A549 (cell line): ENCODE measurements at regions of chr15 and their contacts with region 1.

Region 1: GRCh38 chr15:85330901-85331588 is 49.4 kb upstream of the AKAP13 start:
- DNase-seq: peak; percentile 93 to 95
- ATAC-seq: peak; percentile 92 to 96
- H3K4me3 ChIP-seq: peak overlapping the region; percentile 44; the same call in 2 of the 3 replicates
- H3K27ac ChIP-seq: peak overlapping the region; percentile 78 to 85
- H3K4me1 ChIP-seq: peaks cover 26% of the 10 kb centered on the region
- CTCF ChIP-seq: peak; percentile 98
- EP300 ChIP-seq: no peak
- POLR2A ChIP-seq: no peak
- RAD21 ChIP-seq: peak; percentile 99 to 100

Region 2: GRCh38 chr15:84671211-84671610 is 659.8 kb before region 1 on chr15:
- CTCF ChIA-PET with region 1: no interaction called
- POLR2A ChIA-PET with region 1: no interaction called
- DNase-seq: no peak
- ATAC-seq: no peak
- H3K4me3 ChIP-seq: no peak overlapping the region
- H3K27ac ChIP-seq: no peak overlapping the region
- H3K4me1 ChIP-seq: no peaks in the 10 kb centered on the region
- CTCF ChIP-seq: no peak
- EP300 ChIP-seq: no peak
- POLR2A ChIP-seq: no peak
- RAD21 ChIP-seq: no peak

Region 3: GRCh38 chr15:85318048-85318731 is 12.9 kb before region 1 on chr15:
- CTCF ChIA-PET with region 1: interaction called, 83 read pairs
- POLR2A ChIA-PET with region 1: no interaction called
- DNase-seq: peak; percentile 29 to 75
- ATAC-seq: peak; percentile 70 to 81
- H3K4me3 ChIP-seq: no peak overlapping the region
- H3K27ac ChIP-seq: 0 out of 6 replicates have a peak overlapping the region, but pooled peaks have one; percentile 1 to 6
- H3K4me1 ChIP-seq: peaks cover 23% of the 10 kb centered on the region
- CTCF ChIP-seq: no peak; the same call in 2 of the 3 replicates
- EP300 ChIP-seq: no peak
- POLR2A ChIP-seq: no peak
- RAD21 ChIP-seq: no peak; a peak in 2 of 5 replicates

Region 4: GRCh38 chr15:85380217-85380811 is 49.3 kb after region 1 on chr15 and contains the start of gene AKAP13:
- CTCF ChIA-PET with region 1: interaction called, 27 read pairs
- POLR2A ChIA-PET with region 1: interaction called, 23 read pairs
- DNase-seq: peak; percentile 99 to 100
- ATAC-seq: peak; percentile 94 to 96
- H3K4me3 ChIP-seq: peak within 1 kb of the TSS; percentile 91
- H3K27ac ChIP-seq: peak within 1 kb of the TSS; percentile 90 to 92
- H3K4me1 ChIP-seq: peaks cover 29% of the 10 kb centered on the region; the same call in 2 of the 3 replicates
- CTCF ChIP-seq: no peak
- EP300 ChIP-seq: no peak; a peak in 1 of 5 replicates
- POLR2A ChIP-seq: peak; percentile 84
- RAD21 ChIP-seq: no peak; a peak in 1 of 5 replicates
- polyA plus RNA-seq, gene AKAP13: 28.8 and 59.7 TPM in 2 replicates

Region 5: DNA sequence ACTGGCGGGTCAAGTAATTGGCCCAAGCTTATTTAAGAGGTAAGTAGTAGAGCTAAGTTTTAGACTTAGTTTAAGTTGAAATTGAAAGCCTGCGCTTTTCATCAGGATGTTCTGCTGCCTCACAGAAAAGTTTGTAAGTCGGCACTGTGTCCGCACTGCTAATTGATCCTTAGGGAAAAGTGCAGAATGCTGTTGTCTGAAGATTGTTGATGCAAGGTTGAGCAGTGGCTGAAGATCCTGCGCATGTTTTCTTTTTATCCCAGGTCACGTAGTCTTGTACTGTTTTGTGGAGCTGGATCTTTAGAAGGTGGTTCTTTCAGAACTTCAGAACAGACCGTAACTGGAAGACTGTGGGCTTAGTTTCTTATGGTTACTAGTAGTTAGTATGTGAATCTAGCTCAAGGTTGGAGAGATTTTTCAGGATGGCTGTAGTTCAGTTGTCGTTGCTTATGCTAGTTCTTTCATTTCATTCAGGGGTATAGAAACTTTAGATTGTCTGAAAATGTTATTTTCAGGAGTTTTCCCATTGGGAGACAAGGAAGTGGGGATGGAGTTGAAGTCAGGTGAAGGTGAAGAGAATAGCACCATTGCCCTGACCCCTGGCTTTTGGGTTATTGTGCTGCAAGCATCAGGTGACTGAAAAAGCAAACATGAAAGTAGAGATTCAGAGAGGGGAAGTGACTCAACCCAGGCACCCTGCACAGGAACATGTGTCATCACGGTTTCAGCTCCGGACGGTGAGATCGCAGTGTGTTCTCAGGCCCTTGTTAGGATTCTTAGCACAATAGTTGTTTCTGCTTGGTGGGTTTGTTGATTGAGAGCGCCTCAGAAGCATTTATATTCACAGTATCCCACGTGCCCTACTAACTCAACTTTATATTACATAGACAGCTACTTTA is 82.2 kb after region 1 on chr15:
- CTCF ChIA-PET with region 1: interaction called, 247 read pairs
- POLR2A ChIA-PET with region 1: interaction called, 24 read pairs
- DNase-seq: peak; percentile 93 to 98
- ATAC-seq: peak; percentile 96 to 99
- H3K4me3 ChIP-seq: peak overlapping the region; percentile 16
- H3K27ac ChIP-seq: peak overlapping the region; percentile 80 to 81
- H3K4me1 ChIP-seq: peaks cover 64% of the 10 kb centered on the region
- CTCF ChIP-seq: no peak
- EP300 ChIP-seq: peak; percentile 47 to 63; a peak in 2 of 5 replicates
- POLR2A ChIP-seq: no peak
- RAD21 ChIP-seq: peak in 1 of 2 experiments; percentile 45; a peak in 3 of 5 replicates

Region 6: GRCh38 chr15:85485956-85486567 is 155.0 kb after region 1 on chr15:
- CTCF ChIA-PET with region 1: interaction called, 14 read pairs
- POLR2A ChIA-PET with region 1: no interaction called
- DNase-seq: peak; percentile 72 to 84
- ATAC-seq: peak; percentile 91 to 95
- H3K4me3 ChIP-seq: no peak overlapping the region
- H3K27ac ChIP-seq: no peak overlapping the region
- H3K4me1 ChIP-seq: peaks cover 20% of the 10 kb centered on the region; the same call in 2 of the 3 replicates
- CTCF ChIP-seq: peak; percentile 90
- EP300 ChIP-seq: no peak
- POLR2A ChIP-seq: no peak
- RAD21 ChIP-seq: peak; percentile 89 to 92

Region 7: GRCh38 chr15:85618956-85619491 is 288.0 kb after region 1 on chr15:
- CTCF ChIA-PET with region 1: no interaction called
- POLR2A ChIA-PET with region 1: no interaction called
- DNase-seq: peak in 1 of 2 experiments; percentile 63
- ATAC-seq: peak; percentile 62 to 79
- H3K4me3 ChIP-seq: peak overlapping the region; percentile 14; the same call in 1 of the 3 replicates
- H3K27ac ChIP-seq: peak overlapping the region; percentile 37 to 68; a peak in 5 of 6 replicates
- H3K4me1 ChIP-seq: peaks cover 68% of the 10 kb centered on the region
- CTCF ChIP-seq: no peak
- EP300 ChIP-seq: no peak
- POLR2A ChIP-seq: no peak
- RAD21 ChIP-seq: no peak